Mammary epithelial cell (primary cell): ENCODE measurements at regions of chr1 and their contacts with region 1.

Region 1: DNA sequence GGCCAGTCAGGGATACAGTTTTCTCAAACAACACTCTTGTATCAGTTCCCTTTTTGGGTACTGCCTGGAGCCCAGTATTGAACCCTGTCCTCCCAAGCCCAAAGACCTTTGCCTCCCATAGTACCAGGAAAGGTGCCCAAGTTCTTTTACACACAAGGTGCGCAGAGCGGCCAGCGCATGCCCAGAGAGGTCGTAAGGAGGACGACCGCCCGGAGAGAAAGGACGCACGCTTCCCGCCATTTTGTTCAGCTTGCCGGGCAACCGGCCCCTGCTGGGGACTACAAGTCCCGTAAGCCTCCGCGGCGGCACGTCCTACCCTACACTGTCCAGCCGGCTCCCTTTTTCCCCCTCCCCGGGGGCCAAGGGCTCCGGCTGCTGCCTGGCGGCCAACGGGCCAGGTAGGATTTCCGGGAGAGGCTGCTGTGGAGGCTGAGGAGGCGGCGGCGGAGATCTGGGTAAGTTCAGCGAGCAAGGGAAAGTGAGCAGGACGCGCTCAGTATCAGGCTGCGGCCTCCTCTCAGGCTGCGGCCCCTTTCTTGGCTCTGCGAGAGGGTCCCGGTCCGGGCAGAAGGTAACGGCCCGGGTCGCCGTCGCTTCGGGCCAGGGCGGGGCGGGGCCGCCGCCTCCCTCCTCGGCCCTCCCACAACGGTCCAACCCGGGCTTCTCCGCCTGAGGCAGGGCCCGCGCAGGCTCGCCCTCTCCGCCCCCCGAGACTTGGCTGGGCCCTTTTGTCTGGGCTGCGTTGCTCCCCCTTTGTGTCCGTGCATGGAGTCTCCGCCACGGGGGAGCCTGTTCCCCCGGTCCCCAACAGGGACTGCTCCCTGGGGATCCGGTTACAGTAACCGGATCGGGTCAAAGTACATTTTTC is at the start of gene PHACTR4:
- DNase-seq: peak; percentile 89
- H3K4me3 ChIP-seq: peak within 1 kb of the TSS; percentile 48 to 93 (median 83)
- H3K27ac ChIP-seq: peak within 1 kb of the TSS; percentile 69
- H3K4me1 ChIP-seq: peaks cover 24% of the 10 kb centered on the region
- H3K27me3 ChIP-seq: no peaks in the 10 kb centered on the region
- CTCF ChIP-seq: peak in 1 of 2 donors; percentile 4
- total RNA-seq, gene PHACTR4: 14.7 to 34.1 TPM

Region 2: GRCh38 chr1:28088168-28088961 is 281.2 kb before region 1 on chr1 and contains the start of gene EYA3:
- CTCF ChIA-PET with region 1: no interaction called
- dilution Hi-C with region 1: no loop called
- in situ Hi-C with region 1: no loop called
- intact Hi-C with region 1: loop called (anchors 2 kb)
- DNase-seq: peak; percentile 98
- H3K4me3 ChIP-seq: peak within 1 kb of the TSS; percentile 74 to 85 (median 75)
- H3K27ac ChIP-seq: peak within 1 kb of the TSS; percentile 85
- H3K4me1 ChIP-seq: peaks cover 11% of the 10 kb centered on the region
- H3K27me3 ChIP-seq: no peaks in the 10 kb centered on the region
- CTCF ChIP-seq: no peak
- total RNA-seq, gene EYA3: 12.3 to 21.9 TPM

Region 3: GRCh38 chr1:28208818-28209441 is 160.7 kb before region 1 on chr1:
- CTCF ChIA-PET with region 1: no interaction called
- dilution Hi-C with region 1: no loop called
- in situ Hi-C with region 1: no loop called
- intact Hi-C with region 1: no loop called
- DNase-seq: peak; percentile 62
- H3K4me3 ChIP-seq: no peak overlapping the region
- H3K27ac ChIP-seq: no peak overlapping the region
- H3K4me1 ChIP-seq: no peaks in the 10 kb centered on the region
- H3K27me3 ChIP-seq: no peaks in the 10 kb centered on the region
- CTCF ChIP-seq: peak; percentile 73 to 84

Region 4: DNA sequence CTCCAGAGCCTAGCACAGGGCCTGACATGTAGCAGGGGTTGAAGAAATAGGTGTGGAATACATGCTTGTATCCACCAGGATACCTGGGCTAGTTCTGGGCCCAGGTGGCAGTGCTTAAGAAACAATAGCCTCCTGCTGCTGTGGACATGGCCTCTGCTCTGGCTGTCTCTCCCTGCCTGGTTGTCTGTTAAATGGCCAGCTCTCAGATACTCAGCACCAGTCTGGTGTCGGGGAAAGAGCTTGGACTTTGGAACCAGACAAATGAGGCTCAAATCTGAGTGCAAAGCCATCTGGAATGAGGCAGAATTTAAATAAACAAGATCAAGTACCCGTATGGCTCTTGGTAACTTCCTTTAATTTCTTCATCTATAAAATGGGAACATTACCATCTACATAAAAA is 78.8 kb before region 1 on chr1:
- CTCF ChIA-PET with region 1: interaction called, 14 read pairs
- dilution Hi-C with region 1: no loop called
- in situ Hi-C with region 1: no loop called
- intact Hi-C with region 1: no loop called
- DNase-seq: no peak
- H3K4me3 ChIP-seq: no peak overlapping the region
- H3K27ac ChIP-seq: no peak overlapping the region
- H3K4me1 ChIP-seq: peaks cover 11% of the 10 kb centered on the region
- H3K27me3 ChIP-seq: no peaks in the 10 kb centered on the region
- CTCF ChIP-seq: no peak

Region 5: GRCh38 chr1:28313710-28314546 is 55.7 kb before region 1 on chr1:
- CTCF ChIA-PET with region 1: interaction called, 30 read pairs
- dilution Hi-C with region 1: no loop called
- in situ Hi-C with region 1: no loop called
- intact Hi-C with region 1: no loop called
- DNase-seq: peak; percentile 77
- H3K4me3 ChIP-seq: no peak overlapping the region
- H3K27ac ChIP-seq: no peak overlapping the region
- H3K4me1 ChIP-seq: peaks cover 6% of the 10 kb centered on the region
- H3K27me3 ChIP-seq: no peaks in the 10 kb centered on the region
- CTCF ChIP-seq: no peak

Region 6: GRCh38 chr1:28354121-28354520 is 15.5 kb before region 1 on chr1:
- CTCF ChIA-PET with region 1: no interaction called
- dilution Hi-C with region 1: no loop called
- in situ Hi-C with region 1: no loop called
- intact Hi-C with region 1: loop called (anchors 1 kb)
- DNase-seq: peak; percentile 71
- H3K4me3 ChIP-seq: no peak overlapping the region
- H3K27ac ChIP-seq: peak overlapping the region; percentile 41
- H3K4me1 ChIP-seq: peaks cover 26% of the 10 kb centered on the region
- H3K27me3 ChIP-seq: no peaks in the 10 kb centered on the region
- CTCF ChIP-seq: no peak

Region 7: GRCh38 chr1:28380394-28380793 is 10.8 kb after region 1 on chr1:
- CTCF ChIA-PET with region 1: no interaction called
- dilution Hi-C with region 1: no loop called
- in situ Hi-C with region 1: no loop called
- intact Hi-C with region 1: no loop called
- DNase-seq: no peak
- H3K4me3 ChIP-seq: no peak overlapping the region
- H3K27ac ChIP-seq: no peak overlapping the region
- H3K4me1 ChIP-seq: no peaks in the 10 kb centered on the region
- H3K27me3 ChIP-seq: no peaks in the 10 kb centered on the region
- CTCF ChIP-seq: no peak

Region 8: GRCh38 chr1:28436211-28436769 is 66.7 kb after region 1 on chr1:
- CTCF ChIA-PET with region 1: interaction called, 19 read pairs
- dilution Hi-C with region 1: no loop called
- in situ Hi-C with region 1: no loop called
- intact Hi-C with region 1: no loop called
- DNase-seq: no peak
- H3K4me3 ChIP-seq: no peak overlapping the region
- H3K27ac ChIP-seq: peak overlapping the region; percentile 74
- H3K4me1 ChIP-seq: peaks cover 24% of the 10 kb centered on the region
- H3K27me3 ChIP-seq: no peaks in the 10 kb centered on the region
- CTCF ChIP-seq: peak in 1 of 2 donors; percentile 16